Motor neuron (in vitro differentiated cells): ENCODE measurements at regions of chr5 and their contacts with region 1.

Region 1: GRCh38 chr5:52693280-52693679 is 94.4 kb upstream of the ITGA1 start:
- ATAC-seq: peak in 4 of 8 experiments; percentile 32 to 86 (median 82)
- H3K4me3 ChIP-seq: no peak overlapping the region
- H3K27ac ChIP-seq: no peak overlapping the region
- H3K4me1 ChIP-seq: peaks cover 0 to 6% of the 10 kb centered on the region in 2 donors

Region 2: GRCh38 chr5:51651889-51652288 is 1041.4 kb before region 1 on chr5:
- in situ Hi-C with region 1: no loop called
- ATAC-seq: no peak
- H3K4me3 ChIP-seq: no peak overlapping the region
- H3K27ac ChIP-seq: no peak overlapping the region
- H3K4me1 ChIP-seq: no peaks in the 10 kb centered on the region

Region 3: DNA sequence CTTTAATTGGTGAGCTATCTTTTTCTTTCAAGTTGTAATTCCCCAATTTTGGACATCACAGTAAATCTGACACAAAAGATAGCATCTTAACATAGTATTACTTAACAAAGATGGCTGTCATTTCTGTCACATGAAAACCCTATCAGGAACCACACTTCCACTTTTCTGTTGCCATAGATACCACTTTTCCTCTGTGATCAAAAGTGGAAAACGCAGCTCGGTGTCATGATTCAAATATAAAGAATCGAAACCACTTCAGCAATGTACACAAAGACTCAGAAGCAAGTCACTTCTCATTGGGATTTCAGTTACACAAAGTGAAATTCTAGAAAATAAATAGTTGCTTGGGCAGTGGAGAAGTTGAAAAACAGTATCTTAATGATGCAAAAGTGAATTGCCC is 430.4 kb before region 1 on chr5:
- in situ Hi-C with region 1: no loop called
- ATAC-seq: no peak
- H3K4me3 ChIP-seq: no peak overlapping the region
- H3K27ac ChIP-seq: no peak overlapping the region
- H3K4me1 ChIP-seq: no peaks in the 10 kb centered on the region

Region 4: DNA sequence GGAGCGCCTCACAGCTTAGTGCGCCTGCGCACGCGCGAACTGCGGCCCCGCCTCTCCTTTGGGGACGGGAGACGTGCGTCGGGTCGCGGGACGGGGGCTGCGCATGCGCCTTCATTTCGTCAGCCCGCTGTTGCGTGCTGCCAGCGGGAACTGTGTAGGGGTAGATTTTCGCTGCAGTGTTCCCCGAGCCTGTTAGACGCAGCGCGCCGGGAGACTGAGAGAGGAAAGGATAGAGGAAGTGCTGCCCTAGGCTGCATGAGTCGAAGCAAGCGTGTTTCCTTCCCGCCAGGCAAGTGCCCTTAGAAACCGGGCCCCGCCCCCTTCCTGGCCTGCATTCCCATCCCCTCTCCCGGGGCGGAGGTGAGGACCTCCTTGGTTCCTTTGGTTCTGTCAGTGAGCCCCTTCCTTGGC is 106.7 kb after region 1 on chr5:
- in situ Hi-C with region 1: loop called in 1 of 9 experiments (anchors 25 kb)
- ATAC-seq: peak; percentile 62 to 91 (median 87)
- H3K4me3 ChIP-seq: peak overlapping the region; percentile 56 to 65 (median 61)
- H3K27ac ChIP-seq: peak overlapping the region; percentile 80 to 83
- H3K4me1 ChIP-seq: peaks cover 4 to 21% of the 10 kb centered on the region in 2 donors

Region 5: GRCh38 chr5:52915176-52915875 is 222.0 kb after region 1 on chr5:
- in situ Hi-C with region 1: loop called in 1 of 9 experiments (anchors 25 kb)
- ATAC-seq: peak; percentile 42 to 97 (median 76)
- H3K4me3 ChIP-seq: peak overlapping the region in 2 of 5 donors; percentile 3 to 27
- H3K27ac ChIP-seq: no peak overlapping the region
- H3K4me1 ChIP-seq: peaks cover 0 to 6% of the 10 kb centered on the region in 2 donors